Gastrocnemius medialis (tissue), 4 donors: ENCODE measurements at regions of chr20 and their contacts with region 1.

Region 1: GRCh38 chr20:5126512-5127203 is at the start of gene CDS2:
- DNase-seq: peak; percentile 100
- ATAC-seq: peak; percentile 85 to 86
- H3K4me3 ChIP-seq: peak within 1 kb of the TSS; percentile 73 to 89 (median 82)
- H3K27ac ChIP-seq: peak within 1 kb of the TSS; percentile 92 to 99 (median 95)
- H3K4me1 ChIP-seq: peaks cover 20 to 34% of the 10 kb centered on the region in 2 donors
- H3K27me3 ChIP-seq: no peaks in the 10 kb centered on the region
- CTCF ChIP-seq: peak; percentile 47 to 75 (median 60)
- POLR2A ChIP-seq: peak; percentile 95
- total RNA-seq, gene CDS2: 9.0 to 18.5 (median 14.5) TPM

Region 2: DNA sequence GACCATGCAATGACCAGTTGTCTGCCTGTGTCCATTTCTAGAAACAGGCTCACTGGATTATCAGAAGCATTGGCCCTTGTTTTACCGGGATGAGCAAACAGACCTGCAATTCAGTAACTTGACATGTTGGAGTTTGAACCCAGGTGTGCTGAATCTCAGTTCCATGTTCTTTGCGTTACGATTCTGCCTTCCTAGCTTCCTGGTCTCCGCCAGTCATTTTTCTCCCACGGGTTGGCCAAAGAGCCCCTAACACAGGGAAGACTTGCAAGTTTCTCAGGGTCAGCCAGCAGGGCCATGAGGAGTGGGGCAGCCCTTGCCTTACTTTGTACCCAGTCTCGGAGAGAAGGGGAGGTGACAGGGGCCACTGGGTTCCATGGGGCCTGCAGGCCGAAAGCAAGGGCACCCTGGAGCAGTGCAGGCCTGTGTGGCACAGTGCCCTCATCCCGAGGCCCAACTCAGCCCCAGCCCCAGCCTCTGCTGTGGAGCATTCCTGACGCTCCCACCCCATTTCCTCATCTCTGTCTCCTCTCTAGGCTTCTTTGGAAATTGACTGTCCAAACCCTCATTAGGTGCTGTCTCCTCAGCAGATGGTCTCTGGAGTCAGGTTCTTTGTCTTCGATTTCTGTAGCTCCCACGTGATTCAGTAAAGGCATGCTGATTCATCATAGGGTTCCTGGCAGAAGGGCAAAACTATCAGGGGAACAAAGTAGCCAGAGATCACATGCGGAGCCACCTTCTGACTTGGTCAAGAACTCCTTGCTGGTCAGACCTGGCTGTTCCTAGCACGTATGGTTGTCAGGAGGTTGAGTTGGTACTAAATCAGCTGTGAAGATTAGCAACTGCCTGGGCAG is 23.8 kb after region 1 on chr20:
- in situ Hi-C with region 1: no loop called
- intact Hi-C with region 1: loop called (anchors 2 kb)
- DNase-seq: peak; percentile 83 to 85
- ATAC-seq: peak; percentile 94
- H3K4me3 ChIP-seq: no peak overlapping the region
- H3K27ac ChIP-seq: peak overlapping the region; percentile 84 to 89 (median 87)
- H3K4me1 ChIP-seq: peaks cover 49 to 82% of the 10 kb centered on the region in 2 donors
- H3K27me3 ChIP-seq: no peaks in the 10 kb centered on the region
- CTCF ChIP-seq: no peak
- POLR2A ChIP-seq: peak in 1 of 2 donors; percentile 40

Region 3: DNA sequence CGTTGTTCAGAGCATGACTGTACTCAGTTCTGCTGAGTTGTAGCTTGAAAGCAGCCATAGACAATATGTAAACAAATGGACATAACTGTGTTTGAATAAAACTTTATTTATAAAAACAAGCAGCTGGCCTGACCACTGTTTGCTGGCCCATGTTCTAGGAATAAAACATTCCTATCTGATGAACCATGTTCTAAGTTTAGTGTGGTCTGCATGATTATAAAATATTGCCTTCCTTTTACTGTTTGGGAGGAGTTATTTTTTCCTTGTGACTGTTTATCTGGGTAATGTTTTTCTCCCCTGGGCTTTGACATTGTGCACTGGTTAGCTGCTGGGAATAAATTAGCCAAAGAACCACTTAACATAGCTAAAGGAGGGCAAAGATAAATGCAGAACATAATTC is 55.3 kb after region 1 on chr20:
- in situ Hi-C with region 1: loop called (anchors 5 to 10 kb)
- intact Hi-C with region 1: no loop called
- DNase-seq: no peak
- ATAC-seq: peak; percentile 31 to 33
- H3K4me3 ChIP-seq: no peak overlapping the region
- H3K27ac ChIP-seq: peak overlapping the region in 1 of 4 donors; percentile 27
- H3K4me1 ChIP-seq: peaks cover 0 to 9% of the 10 kb centered on the region in 2 donors
- H3K27me3 ChIP-seq: no peaks in the 10 kb centered on the region
- CTCF ChIP-seq: no peak
- POLR2A ChIP-seq: no peak

Region 4: DNA sequence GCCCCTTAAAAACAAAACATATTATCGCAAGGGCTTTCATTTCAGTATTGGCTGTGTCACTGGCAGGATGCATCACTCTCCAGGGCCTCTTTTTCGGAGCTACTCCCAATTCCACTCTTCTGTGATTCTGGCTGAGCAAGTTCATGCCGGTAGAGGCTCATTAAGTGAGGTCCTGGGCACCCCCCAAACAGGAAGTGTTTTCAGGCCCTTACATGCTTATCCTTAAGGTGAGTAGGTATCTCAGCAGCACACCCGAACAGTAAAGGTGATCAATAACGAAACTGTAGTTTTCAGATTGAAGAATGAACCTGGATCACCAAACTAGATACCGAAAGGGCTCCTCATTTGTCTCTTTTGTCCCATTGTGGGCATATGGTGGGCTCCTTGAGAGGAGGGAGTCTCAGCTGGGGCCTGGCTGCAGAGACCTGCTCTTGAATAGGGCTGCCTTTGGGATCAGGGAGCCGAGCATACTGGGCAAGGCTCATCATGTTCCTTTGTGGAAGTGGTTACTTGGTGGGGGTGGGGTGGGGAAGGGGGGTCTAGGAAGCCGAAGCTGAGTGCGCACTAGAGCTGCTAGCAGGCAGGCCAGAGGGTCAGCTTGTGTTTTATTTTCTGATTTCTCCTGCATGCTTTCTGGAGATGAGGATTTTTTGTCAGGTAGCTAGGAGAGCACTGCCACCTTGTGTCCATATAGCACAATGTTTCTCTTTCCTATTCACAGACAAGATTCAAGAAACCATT is 65.3 kb after region 1 on chr20:
- in situ Hi-C with region 1: loop called (anchors 5 to 10 kb)
- intact Hi-C with region 1: loop called (anchors 1 kb)
- DNase-seq: peak in 1 of 2 donors; percentile 46
- ATAC-seq: peak; percentile 67 to 89
- H3K4me3 ChIP-seq: no peak overlapping the region
- H3K27ac ChIP-seq: peak overlapping the region; percentile 46 to 80 (median 68)
- H3K4me1 ChIP-seq: peaks cover 6 to 22% of the 10 kb centered on the region in 2 donors
- H3K27me3 ChIP-seq: no peaks in the 10 kb centered on the region
- CTCF ChIP-seq: peak; percentile 76 to 82 (median 80)
- POLR2A ChIP-seq: no peak

Region 5: DNA sequence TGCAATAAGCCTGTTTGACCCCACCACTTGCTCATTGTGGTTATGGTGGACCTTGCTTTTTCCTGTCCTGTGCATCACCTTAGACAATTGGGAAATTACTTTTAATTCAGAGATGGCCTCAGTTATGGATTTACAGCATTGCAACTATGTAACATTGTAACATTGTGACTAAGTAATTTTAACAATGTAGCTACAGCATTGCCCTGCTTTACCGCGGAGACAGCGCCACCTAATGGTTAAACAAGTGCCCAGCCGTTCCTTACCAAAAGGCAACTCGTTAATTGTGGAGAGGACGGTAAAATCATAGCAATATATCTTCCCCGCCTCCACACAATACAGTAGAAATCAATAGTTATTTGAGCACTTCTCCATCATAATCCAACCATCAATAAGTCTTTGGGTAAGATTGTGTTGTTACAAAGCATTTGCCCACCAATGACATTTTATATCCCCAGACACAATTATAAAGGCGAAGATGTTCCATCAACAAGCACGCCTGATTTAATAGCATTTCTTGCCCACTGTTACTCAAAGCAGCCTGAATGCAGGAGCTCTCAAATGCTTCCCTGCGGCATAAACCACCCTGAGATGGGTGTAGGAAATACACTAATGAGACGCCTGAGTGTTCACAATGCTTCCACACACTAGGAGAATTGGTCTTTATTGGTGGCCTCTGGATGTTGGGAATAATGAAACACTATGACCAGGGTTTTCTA is 96.4 kb after region 1 on chr20:
- in situ Hi-C with region 1: no loop called
- intact Hi-C with region 1: loop called (anchors 1 kb)
- DNase-seq: peak in 1 of 2 donors; percentile 38
- ATAC-seq: peak; percentile 65 to 86
- H3K4me3 ChIP-seq: no peak overlapping the region
- H3K27ac ChIP-seq: no peak overlapping the region
- H3K4me1 ChIP-seq: peaks cover 0 to 5% of the 10 kb centered on the region in 2 donors
- H3K27me3 ChIP-seq: no peaks in the 10 kb centered on the region
- CTCF ChIP-seq: peak; percentile 60 to 86 (median 69)
- POLR2A ChIP-seq: no peak

Region 6: GRCh38 chr20:5448449-5449118 is 321.9 kb after region 1 on chr20:
- in situ Hi-C with region 1: no loop called
- intact Hi-C with region 1: loop called (anchors 10 kb)
- DNase-seq: no peak
- ATAC-seq: peak in 1 of 2 donors; percentile 51
- H3K4me3 ChIP-seq: no peak overlapping the region
- H3K27ac ChIP-seq: no peak overlapping the region
- H3K4me1 ChIP-seq: no peaks in the 10 kb centered on the region
- H3K27me3 ChIP-seq: no peaks in the 10 kb centered on the region
- CTCF ChIP-seq: peak in 3 of 5 experiments; percentile 41 to 57 (median 53)
- POLR2A ChIP-seq: no peak